ENCODE measurements at regions of chr11 and their contacts with region 1.

Region 1: GRCh38 chr11:59802639-59803176 is 7.9 kb downstream of the MRPL16 start:
- DNase-seq: peak in 1 of 2 donors; percentile 26
- H3K4me3 ChIP-seq: no peak overlapping the region
- H3K27ac ChIP-seq: peak overlapping the region in 1 of 2 donors; percentile 1
- H3K4me1 ChIP-seq: no peaks in the 10 kb centered on the region
- H3K27me3 ChIP-seq: no peaks in the 10 kb centered on the region
- CTCF ChIP-seq: peak; percentile 52 to 75 (median 69)
- POLR2A ChIP-seq: no peak

Region 2: GRCh38 chr11:59615637-59616395 is 186.9 kb before region 1 on chr11 and contains the start of gene OSBP:
- intact Hi-C with region 1: no loop called
- DNase-seq: peak; percentile 100
- H3K4me3 ChIP-seq: peak within 1 kb of the TSS; percentile 81 to 97
- H3K27ac ChIP-seq: peak within 1 kb of the TSS; percentile 97 to 99
- H3K4me1 ChIP-seq: peaks cover 0 to 4% of the 10 kb centered on the region in 2 donors
- H3K27me3 ChIP-seq: no peaks in the 10 kb centered on the region
- CTCF ChIP-seq: peak in 2 of 4 experiments; percentile 7 to 42
- POLR2A ChIP-seq: peak; percentile 76 to 90
- total RNA-seq, gene OSBP: 27.4 to 51.0 (median 41.9) TPM

Region 3: GRCh38 chr11:59753650-59754493 is 48.8 kb before region 1 on chr11:
- intact Hi-C with region 1: loop called (anchors 5 kb)
- DNase-seq: peak; percentile 81 to 86
- H3K4me3 ChIP-seq: peak overlapping the region; percentile 56 to 90
- H3K27ac ChIP-seq: peak overlapping the region; percentile 97 to 98
- H3K4me1 ChIP-seq: no peaks in the 10 kb centered on the region
- H3K27me3 ChIP-seq: no peaks in the 10 kb centered on the region
- CTCF ChIP-seq: peak; percentile 87 to 98 (median 90)
- POLR2A ChIP-seq: peak in 1 of 2 donors; percentile 17

Region 4: GRCh38 chr11:59957094-59957493 is 154.4 kb after region 1 on chr11:
- intact Hi-C with region 1: no loop called
- DNase-seq: no peak
- H3K4me3 ChIP-seq: no peak overlapping the region
- H3K27ac ChIP-seq: no peak overlapping the region
- H3K4me1 ChIP-seq: no peaks in the 10 kb centered on the region
- H3K27me3 ChIP-seq: no peaks in the 10 kb centered on the region
- CTCF ChIP-seq: no peak
- POLR2A ChIP-seq: no peak